ENCODE measurements at regions of chr17 and their contacts with region 1.

Region 1: DNA sequence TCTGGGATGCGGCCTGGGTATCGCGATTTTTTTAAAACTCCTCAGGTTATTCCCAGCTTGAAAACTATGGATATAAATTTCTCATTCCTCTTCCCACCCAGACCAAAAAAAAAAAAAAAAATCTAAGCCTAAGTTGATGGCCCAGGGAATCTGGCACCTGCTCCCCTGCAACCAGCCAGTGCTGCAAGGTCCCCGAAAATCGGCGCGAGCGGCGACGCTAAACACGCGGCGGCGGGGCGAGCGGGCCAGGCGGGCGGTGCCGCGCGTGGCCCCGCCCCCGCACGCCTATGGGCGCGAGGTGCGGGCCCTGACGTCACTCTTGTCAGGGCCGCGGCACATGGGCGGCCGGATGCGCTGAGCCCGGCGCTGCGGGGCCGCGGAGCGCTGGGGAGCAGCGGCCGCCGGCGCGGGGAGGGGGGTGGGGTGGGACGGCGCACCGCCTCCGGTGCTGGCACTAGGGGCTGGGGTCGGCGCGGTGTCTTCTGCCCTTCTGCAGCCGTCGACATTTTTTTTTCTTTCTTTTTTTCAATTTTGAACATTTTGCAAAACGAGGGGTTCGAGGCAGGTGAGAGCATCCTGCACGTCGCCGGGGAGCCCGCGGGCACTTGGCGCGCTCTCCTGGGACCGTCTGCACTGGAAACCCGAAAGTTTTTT is at the start of gene HLF:
- DNase-seq: peak; percentile 81 to 90 (median 87)
- ATAC-seq: peak; percentile 86 to 98 (median 93)
- H3K4me3 ChIP-seq: peak within 1 kb of the TSS; percentile 50 to 89 (median 68)
- H3K27ac ChIP-seq: peak within 1 kb of the TSS; percentile 36 to 94 (median 82)
- H3K4me1 ChIP-seq: peaks cover 0 to 52% (median 34%) of the 10 kb centered on the region in 12 donors
- H3K27me3 ChIP-seq: peaks cover 0 to 60% (median 0%) of the 10 kb centered on the region in 9 donors
- CTCF ChIP-seq: no peak
- POLR2A ChIP-seq: peak in 1 of 2 donors; percentile 55
- total RNA-seq, gene HLF: 7.5 to 46.3 (median 28.7) TPM

Region 2: GRCh38 chr17:55285340-55286301 is 20.8 kb after region 1 on chr17:
- intact Hi-C with region 1: loop called in 1 of 10 experiments (anchors 2 kb)
- DNase-seq: peak; percentile 87 to 98 (median 92)
- ATAC-seq: peak; percentile 86 to 91 (median 90)
- H3K4me3 ChIP-seq: peak overlapping the region in 3 of 12 donors; percentile 6 to 23 (median 17)
- H3K27ac ChIP-seq: peak overlapping the region; percentile 79 to 98 (median 90)
- H3K4me1 ChIP-seq: peaks cover 0 to 94% (median 57%) of the 10 kb centered on the region in 12 donors
- H3K27me3 ChIP-seq: no peaks in the 10 kb centered on the region
- CTCF ChIP-seq: no peak
- POLR2A ChIP-seq: no peak

Region 3: GRCh38 chr17:55295411-55296170 is 30.8 kb after region 1 on chr17:
- intact Hi-C with region 1: loop called in 5 of 10 experiments (anchors 1 to 5 kb)
- DNase-seq: peak in 3 of 5 donors; percentile 48 to 49 (median 48)
- ATAC-seq: peak; percentile 78 to 86 (median 86)
- H3K4me3 ChIP-seq: no peak overlapping the region
- H3K27ac ChIP-seq: peak overlapping the region in 10 of 12 donors; percentile 9 to 62 (median 36)
- H3K4me1 ChIP-seq: peaks cover 0 to 24% (median 9%) of the 10 kb centered on the region in 12 donors
- H3K27me3 ChIP-seq: no peaks in the 10 kb centered on the region
- CTCF ChIP-seq: peak; percentile 71 to 92 (median 86)
- POLR2A ChIP-seq: no peak

Region 4: DNA sequence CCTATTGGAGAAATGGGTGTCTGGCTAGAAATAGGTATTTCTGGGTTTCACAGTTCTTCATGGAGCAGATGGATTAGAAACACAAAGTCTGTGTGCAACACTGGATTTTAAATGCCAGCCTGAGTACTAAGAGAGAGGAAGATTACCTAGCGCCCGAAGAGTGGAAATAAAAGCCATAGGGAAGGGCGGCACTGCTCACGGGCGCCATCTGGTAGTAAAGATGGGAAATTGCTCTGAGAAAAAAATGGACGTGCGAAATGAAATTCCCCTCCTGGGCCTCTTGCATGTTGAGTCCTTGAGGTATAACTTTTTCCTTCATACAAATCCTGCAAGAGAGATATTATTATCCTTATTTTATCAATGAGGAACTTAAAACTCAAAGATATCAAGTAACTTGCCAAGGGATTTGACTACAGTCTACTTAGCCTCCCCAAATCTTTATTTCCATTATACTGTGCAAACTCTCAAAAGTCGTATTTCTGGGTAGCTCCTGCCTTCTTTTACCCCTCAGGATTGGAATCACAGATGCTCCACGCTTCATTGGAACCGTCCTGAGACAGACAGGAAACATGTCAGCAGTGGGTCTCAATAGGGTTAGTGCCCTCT is 84.1 kb after region 1 on chr17:
- intact Hi-C with region 1: loop called in 1 of 10 experiments (anchors 2 kb)
- DNase-seq: peak in 4 of 5 donors; percentile 16 to 37 (median 34)
- ATAC-seq: peak in 3 of 4 donors; percentile 69 to 78 (median 76)
- H3K4me3 ChIP-seq: no peak overlapping the region
- H3K27ac ChIP-seq: no peak overlapping the region
- H3K4me1 ChIP-seq: peaks cover 0 to 9% (median 0%) of the 10 kb centered on the region in 12 donors
- H3K27me3 ChIP-seq: no peaks in the 10 kb centered on the region
- CTCF ChIP-seq: peak; percentile 77 to 95 (median 85)
- POLR2A ChIP-seq: no peak

Measured in heart left ventricle (tissue), 16 donors.